Ovary (tissue), 10 donors: ENCODE measurements at regions of chr16 and their contacts with region 1.

Region 1: DNA sequence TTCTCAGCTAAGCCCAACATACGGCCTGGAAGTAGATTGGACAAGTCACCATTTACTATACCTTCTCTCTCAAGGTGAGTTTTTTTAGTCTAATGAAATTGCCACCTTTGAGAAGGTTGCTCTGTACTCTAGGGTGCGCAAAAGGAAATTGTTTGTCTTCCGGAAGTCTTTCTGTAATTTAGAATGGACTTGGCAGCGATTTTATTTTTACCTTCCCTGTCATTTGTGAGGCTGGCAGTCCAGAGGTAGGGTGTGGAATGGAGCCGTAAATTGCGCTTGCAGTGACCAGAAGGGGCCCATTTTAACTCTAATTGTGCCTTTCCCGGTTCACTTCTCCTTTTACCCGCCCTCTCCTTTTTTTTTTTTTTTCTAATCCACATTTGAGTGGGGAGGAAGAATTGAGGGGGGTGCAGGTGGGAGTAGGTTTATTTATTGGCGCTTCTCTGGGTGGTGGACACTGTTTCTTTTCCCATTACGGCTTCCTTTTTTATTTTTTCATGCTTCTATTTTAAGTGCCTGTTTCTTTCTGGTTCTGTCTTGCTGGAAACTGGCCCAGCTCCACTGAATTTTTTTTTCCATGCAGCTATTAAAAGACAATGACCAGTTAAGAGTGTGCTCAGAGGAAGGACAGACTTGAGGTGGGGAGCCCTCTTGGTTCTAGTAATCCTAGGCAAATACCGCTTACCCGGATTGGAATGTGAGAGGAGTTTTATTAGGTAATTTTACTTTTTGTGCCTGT is 89.7 kb upstream of the CLEC18A start:
- DNase-seq: peak in 4 of 5 donors; percentile 57 to 76 (median 72)
- H3K4me3 ChIP-seq: peak overlapping the region; percentile 6
- H3K27ac ChIP-seq: peak overlapping the region in 1 of 2 donors; percentile 48
- H3K4me1 ChIP-seq: peaks cover 14% of the 10 kb centered on the region
- H3K27me3 ChIP-seq: no peaks in the 10 kb centered on the region
- CTCF ChIP-seq: no peak
- EP300 ChIP-seq: no peak
- POLR2A ChIP-seq: no peak

Region 2: DNA sequence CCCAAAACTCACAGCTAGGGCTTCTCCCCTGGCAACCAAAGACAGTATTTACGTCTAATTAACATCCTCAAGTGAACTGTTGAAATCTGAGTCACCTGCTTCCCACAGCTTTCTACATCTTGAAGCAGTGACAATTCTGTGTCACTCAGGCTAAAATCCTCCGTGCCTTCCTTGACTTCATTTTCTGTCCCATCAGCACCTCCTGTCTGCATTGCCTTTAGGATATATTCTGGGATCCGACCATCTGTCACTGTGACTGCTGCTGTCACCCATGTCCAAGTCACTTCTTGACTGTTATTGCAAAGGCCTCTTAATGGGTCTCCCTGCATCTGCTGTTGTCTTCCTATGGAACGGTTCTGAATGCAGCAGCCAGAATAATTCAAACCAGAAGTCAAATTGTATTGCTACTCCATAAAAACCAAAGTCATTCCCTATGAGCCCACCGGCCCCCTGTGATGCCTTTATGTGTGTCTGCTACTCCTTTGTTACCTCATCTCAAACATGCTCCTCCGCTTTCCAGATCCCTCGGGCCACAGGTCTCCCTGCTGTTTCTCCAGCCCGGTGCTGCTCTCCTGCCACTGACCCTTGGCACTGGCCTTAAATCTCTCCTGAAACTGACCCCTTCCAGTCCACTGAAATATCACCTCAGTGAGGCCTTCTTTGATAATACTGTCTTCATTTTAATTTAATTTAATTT is 42.4 kb before region 1 on chr16:
- intact Hi-C with region 1: loop called in 1 of 4 experiments (anchors 10 kb)
- DNase-seq: no peak
- H3K4me3 ChIP-seq: no peak overlapping the region
- H3K27ac ChIP-seq: no peak overlapping the region
- H3K4me1 ChIP-seq: peaks cover 6% of the 10 kb centered on the region
- H3K27me3 ChIP-seq: no peaks in the 10 kb centered on the region
- CTCF ChIP-seq: no peak
- EP300 ChIP-seq: no peak
- POLR2A ChIP-seq: no peak